ENCODE measurements at regions of chr13 and their contacts with region 1.

Region 1: GRCh38 chr13:40102856-40103255 is 447.4 kb downstream of the COG6 start:
- DNase-seq: peak; percentile 97
- H3K4me3 Mint-ChIP-seq: peak overlapping the region; percentile 56
- H3K27ac Mint-ChIP-seq: peak overlapping the region; percentile 98
- H3K4me1 Mint-ChIP-seq: peaks cover 55% of the 10 kb centered on the region
- H3K27me3 Mint-ChIP-seq: no peaks in the 10 kb centered on the region

Region 2: DNA sequence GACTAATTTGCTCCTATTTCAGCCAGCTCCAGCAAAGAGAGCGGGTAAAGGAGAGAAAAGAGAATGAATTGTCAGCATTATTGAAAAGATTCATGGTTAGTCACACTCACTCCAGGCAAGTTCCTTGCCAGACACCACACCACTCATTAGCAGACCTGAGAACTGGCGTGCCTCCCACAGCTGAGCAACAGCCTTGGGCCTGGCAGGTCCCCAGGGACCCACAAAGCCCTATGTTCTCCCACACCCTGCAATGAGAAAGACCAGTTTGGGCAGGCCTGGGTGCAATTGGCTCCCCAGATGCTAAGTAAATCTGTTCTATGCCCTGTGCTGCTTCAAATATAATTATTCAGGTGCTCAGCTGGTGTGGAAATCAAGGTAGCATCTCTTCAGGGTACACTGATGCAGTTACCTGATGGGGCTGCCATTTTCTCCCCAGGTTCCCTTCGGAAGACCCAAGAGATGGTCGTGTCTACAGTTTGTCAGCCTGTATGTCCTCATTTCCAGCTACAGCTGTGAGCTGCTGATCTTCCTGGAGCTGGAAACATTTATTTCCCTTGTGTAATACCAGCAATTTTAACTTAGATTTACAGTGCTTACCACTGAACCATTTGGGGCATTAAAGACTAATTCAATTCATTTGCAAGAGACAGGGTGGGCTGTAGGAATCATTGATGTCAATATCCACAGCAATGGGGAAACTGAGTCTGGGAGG is 42.4 kb before region 1 on chr13:
- CTCF ChIA-PET with region 1: no interaction called
- POLR2A ChIA-PET with region 1: interaction called, 3 read pairs
- intact Hi-C with region 1: loop called (anchors 1 kb)
- DNase-seq: peak; percentile 83
- H3K4me3 Mint-ChIP-seq: peak overlapping the region; percentile 42
- H3K27ac Mint-ChIP-seq: peak overlapping the region; percentile 47
- H3K4me1 Mint-ChIP-seq: peaks cover 46% of the 10 kb centered on the region
- H3K27me3 Mint-ChIP-seq: no peaks in the 10 kb centered on the region

Region 3: DNA sequence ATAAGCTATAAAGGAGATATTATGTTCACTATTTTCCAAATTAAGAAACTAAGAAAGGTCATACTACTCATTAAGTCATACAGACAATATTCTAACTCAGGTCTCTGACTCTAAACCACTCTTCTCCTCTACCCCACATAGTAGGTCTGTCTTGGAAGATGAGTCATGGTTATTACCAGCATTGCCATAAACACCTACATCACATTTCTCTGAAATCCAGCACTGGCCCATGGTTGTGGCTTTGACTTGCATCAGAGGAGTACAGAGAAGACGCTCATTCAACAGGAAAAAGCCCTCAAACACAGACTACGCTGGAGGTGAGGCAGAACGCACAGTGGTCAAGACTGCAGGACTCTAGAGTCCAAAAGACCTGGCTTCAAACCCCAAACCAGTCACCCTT is 29.4 kb after region 1 on chr13:
- CTCF ChIA-PET with region 1: no interaction called
- POLR2A ChIA-PET with region 1: no interaction called
- intact Hi-C with region 1: loop called (anchors 1 kb)
- DNase-seq: peak; percentile 80
- H3K4me3 Mint-ChIP-seq: no peak overlapping the region
- H3K27ac Mint-ChIP-seq: peak overlapping the region; percentile 77
- H3K4me1 Mint-ChIP-seq: peaks cover 42% of the 10 kb centered on the region
- H3K27me3 Mint-ChIP-seq: no peaks in the 10 kb centered on the region

Region 4: GRCh38 chr13:40206241-40207000 is 103.6 kb after region 1 on chr13:
- CTCF ChIA-PET with region 1: interaction called, 3 read pairs
- POLR2A ChIA-PET with region 1: interaction called, 4 read pairs
- intact Hi-C with region 1: loop called (anchors 1 kb)
- DNase-seq: peak; percentile 68
- H3K4me3 Mint-ChIP-seq: peak overlapping the region; percentile 60
- H3K27ac Mint-ChIP-seq: peak overlapping the region; percentile 99
- H3K4me1 Mint-ChIP-seq: peaks cover 52% of the 10 kb centered on the region
- H3K27me3 Mint-ChIP-seq: no peaks in the 10 kb centered on the region

Region 5: DNA sequence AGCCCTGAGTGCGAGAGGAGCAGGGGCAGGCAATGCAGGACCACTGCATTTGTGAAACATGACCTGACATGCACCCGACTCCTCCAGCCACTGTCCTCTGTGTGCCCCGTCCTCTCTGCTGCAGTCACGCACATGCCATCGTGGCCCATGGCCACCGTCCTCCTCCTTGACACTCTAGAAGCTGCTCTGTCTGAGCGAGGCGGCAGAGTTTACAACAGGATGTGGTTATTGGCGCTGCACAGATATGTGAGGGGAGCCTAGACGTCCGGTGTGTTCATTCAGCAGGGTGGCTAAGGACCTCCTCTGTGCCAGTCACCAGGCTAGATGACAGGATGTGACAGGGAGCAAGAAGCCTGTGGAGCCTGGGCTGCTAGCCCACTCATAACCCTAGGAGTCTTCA is 285.8 kb after region 1 on chr13:
- CTCF ChIA-PET with region 1: no interaction called
- POLR2A ChIA-PET with region 1: interaction called, 6 read pairs
- intact Hi-C with region 1: loop called (anchors 5 kb)
- DNase-seq: peak; percentile 92
- H3K4me3 Mint-ChIP-seq: peak overlapping the region; percentile 68
- H3K27ac Mint-ChIP-seq: peak overlapping the region; percentile 94
- H3K4me1 Mint-ChIP-seq: peaks cover 29% of the 10 kb centered on the region
- H3K27me3 Mint-ChIP-seq: no peaks in the 10 kb centered on the region

Region 6: GRCh38 chr13:40770934-40771618 is 668.2 kb after region 1 on chr13 and contains the start of gene MRPS31:
- CTCF ChIA-PET with region 1: no interaction called
- POLR2A ChIA-PET with region 1: no interaction called
- intact Hi-C with region 1: loop called (anchors 1 kb)
- DNase-seq: peak; percentile 97
- H3K4me3 Mint-ChIP-seq: peak within 1 kb of the TSS; percentile 100
- H3K27ac Mint-ChIP-seq: peak within 1 kb of the TSS; percentile 94
- H3K4me1 Mint-ChIP-seq: peaks cover 34% of the 10 kb centered on the region
- H3K27me3 Mint-ChIP-seq: no peaks in the 10 kb centered on the region
- total RNA-seq, gene MRPS31: 35.6 to 40.4 TPM